WTC11 (cell line): ENCODE measurements at regions of chr6 and their contacts with region 1.

Region 1: GRCh38 chr6:156283091-156283490 is 494.1 kb upstream of the ARID1B start:
- DNase-seq: no peak
- ATAC-seq: no peak
- H3K4me3 Mint-ChIP-seq: no peak overlapping the region
- H3K27ac Mint-ChIP-seq: no peak overlapping the region
- H3K4me1 Mint-ChIP-seq: 0 out of 2 replicates have a peak, but pooled peaks cover 3% of the 10 kb centered on the region
- H3K27me3 Mint-ChIP-seq: no peaks in the 10 kb centered on the region
- CTCF ChIP-seq: no peak

Region 2: GRCh38 chr6:155414049-155414448 is 869.0 kb before region 1 on chr6:
- CTCF ChIA-PET with region 1: no interaction called
- POLR2A ChIA-PET with region 1: interaction called, 10 read pairs
- DNase-seq: no peak
- ATAC-seq: no peak
- H3K4me3 Mint-ChIP-seq: no peak overlapping the region
- H3K27ac Mint-ChIP-seq: no peak overlapping the region
- H3K4me1 Mint-ChIP-seq: peaks cover 25% of the 10 kb centered on the region
- H3K27me3 Mint-ChIP-seq: no peaks in the 10 kb centered on the region
- CTCF ChIP-seq: no peak

Region 3: GRCh38 chr6:155993240-155993639 is 289.9 kb before region 1 on chr6:
- CTCF ChIA-PET with region 1: no interaction called
- POLR2A ChIA-PET with region 1: no interaction called
- DNase-seq: no peak
- ATAC-seq: no peak
- H3K4me3 Mint-ChIP-seq: no peak overlapping the region
- H3K27ac Mint-ChIP-seq: no peak overlapping the region
- H3K4me1 Mint-ChIP-seq: peaks cover 8% of the 10 kb centered on the region
- H3K27me3 Mint-ChIP-seq: no peaks in the 10 kb centered on the region
- CTCF ChIP-seq: no peak

Region 4: DNA sequence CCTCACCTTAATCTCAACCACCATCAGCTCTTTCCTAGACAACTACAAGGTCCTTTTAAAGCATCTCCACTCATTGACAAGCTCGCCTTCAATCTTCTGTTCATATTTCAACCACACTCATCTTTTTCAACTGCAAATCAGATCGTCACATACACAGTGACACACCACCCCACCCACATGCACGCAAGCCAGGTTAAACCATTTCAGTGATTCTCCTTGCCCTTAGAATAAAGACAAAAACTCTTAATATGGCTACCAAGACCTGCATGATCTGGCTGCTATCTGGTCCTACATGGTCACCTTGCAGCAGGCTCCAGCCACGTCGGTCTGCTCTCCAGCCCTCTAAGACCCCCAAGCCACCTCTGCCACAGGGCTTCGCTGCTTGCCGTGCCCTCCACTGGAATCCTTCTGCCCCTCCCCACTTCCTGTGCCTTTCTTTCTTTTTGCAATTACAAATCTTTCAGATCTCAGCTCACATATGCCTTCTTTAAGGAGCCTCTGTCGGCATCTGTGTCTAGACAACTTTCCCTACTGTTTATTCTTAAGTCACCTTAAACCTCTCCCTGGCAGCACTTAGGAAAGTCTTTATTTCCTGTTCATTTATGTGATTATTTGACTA is 13.2 kb before region 1 on chr6:
- CTCF ChIA-PET with region 1: no interaction called
- POLR2A ChIA-PET with region 1: no interaction called
- DNase-seq: no peak
- ATAC-seq: no peak
- H3K4me3 Mint-ChIP-seq: no peak overlapping the region
- H3K27ac Mint-ChIP-seq: no peak overlapping the region
- H3K4me1 Mint-ChIP-seq: peaks cover 19% of the 10 kb centered on the region
- H3K27me3 Mint-ChIP-seq: no peaks in the 10 kb centered on the region
- CTCF ChIP-seq: no peak